Mammary epithelial cell (primary cell): ENCODE measurements at regions of chr5 and their contacts with region 1.

Region 1: DNA sequence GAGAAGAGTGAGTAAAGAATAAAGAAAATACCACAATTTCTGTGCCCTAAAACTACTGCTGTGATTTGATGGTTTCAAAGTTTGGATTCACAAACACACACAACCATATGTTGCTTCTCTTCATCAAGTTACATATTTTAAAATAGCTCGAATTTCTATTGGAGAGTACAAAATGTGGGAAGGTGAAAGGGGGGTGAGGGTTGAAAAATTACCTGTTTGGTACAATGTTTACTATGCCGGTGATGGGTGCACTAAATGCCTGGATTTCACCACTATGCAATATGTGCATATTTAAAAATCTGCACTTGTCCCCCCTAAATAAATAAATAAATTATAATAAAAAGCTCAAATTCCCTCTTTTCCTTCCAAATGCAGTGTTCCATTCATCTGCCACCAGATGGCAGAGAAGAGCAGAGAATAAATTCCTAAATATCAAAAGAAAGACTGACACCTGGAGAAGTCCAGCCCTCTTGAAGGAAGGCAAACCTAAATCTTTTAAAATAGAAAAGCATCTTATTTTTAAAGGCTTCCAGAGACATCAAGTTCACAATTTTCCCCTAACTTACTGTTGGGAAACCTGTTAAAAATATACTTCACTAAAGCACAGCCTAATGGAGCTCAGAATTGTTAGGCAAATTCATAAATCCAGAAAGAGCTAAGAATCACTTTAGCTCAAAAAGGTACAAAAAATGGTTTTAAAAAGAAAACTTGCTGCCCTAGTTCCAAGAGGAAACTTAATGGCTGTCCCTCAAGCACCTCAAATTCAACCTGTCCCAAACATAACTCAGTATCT is 24.8 kb upstream of the HNRNPA0 start:
- DNase-seq: peak; percentile 24
- H3K4me3 ChIP-seq: no peak overlapping the region
- H3K27ac ChIP-seq: no peak overlapping the region
- H3K4me1 ChIP-seq: no peaks in the 10 kb centered on the region
- H3K27me3 ChIP-seq: peaks cover 2% of the 10 kb centered on the region
- CTCF ChIP-seq: peak; percentile 70 to 75

Region 2: GRCh38 chr5:137822158-137822764 is 43.3 kb after region 1 on chr5:
- CTCF ChIA-PET with region 1: no interaction called
- dilution Hi-C with region 1: no loop called
- in situ Hi-C with region 1: loop called in 1 of 2 experiments (anchors 5 kb)
- intact Hi-C with region 1: loop called (anchors 1 kb)
- DNase-seq: peak; percentile 28
- H3K4me3 ChIP-seq: no peak overlapping the region
- H3K27ac ChIP-seq: no peak overlapping the region
- H3K4me1 ChIP-seq: no peaks in the 10 kb centered on the region
- H3K27me3 ChIP-seq: no peaks in the 10 kb centered on the region
- CTCF ChIP-seq: peak; percentile 37 to 68

Region 3: DNA sequence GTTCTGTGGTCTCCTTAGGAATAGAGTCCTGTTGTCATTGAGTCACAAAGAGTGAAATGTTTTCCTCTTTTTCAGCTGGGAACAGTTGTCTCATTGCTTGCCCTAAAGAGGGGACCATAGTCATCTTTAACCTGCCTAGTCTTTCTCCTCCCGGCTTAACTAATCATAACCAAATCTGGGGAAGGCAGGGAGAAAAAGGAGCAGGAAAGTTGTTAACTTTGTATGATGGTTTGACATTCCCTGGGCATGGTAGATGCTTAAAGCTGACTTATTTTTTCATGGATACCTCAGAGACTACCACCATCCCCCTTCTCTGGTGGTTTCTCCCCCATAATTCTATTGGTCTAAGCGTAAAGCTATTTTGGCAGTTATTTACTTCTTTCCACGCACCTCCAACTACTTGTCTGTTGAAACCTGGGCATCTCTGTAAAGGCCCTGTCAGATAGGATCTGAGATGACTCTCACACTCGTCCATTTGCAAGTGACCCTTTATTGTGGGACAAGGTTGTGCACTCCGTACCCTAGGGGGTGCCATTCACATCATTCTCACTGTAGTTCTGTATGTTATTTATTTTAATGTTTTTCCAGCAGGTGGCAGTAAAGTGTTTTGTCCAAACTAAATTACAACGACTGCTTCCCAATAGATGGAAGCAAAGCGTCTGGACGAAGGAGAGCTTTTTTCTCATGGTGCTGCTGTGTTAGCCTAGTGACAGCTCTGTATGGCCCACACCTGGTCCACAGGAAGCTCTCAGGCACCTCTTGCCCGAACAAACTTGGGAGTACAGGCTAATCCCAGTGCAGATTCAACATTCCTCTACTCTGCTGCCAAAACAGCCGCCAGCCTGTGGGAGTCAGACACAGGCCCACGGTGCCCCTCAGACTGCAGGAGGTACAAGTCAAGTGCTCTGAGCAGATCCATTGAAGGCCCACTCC is 256.9 kb after region 1 on chr5:
- CTCF ChIA-PET with region 1: interaction called, 5 read pairs
- dilution Hi-C with region 1: no loop called
- in situ Hi-C with region 1: loop called in 1 of 2 experiments (anchors 25 kb)
- intact Hi-C with region 1: loop called (anchors 1 kb)
- DNase-seq: peak; percentile 77
- H3K4me3 ChIP-seq: no peak overlapping the region
- H3K27ac ChIP-seq: no peak overlapping the region
- H3K4me1 ChIP-seq: peaks cover 10% of the 10 kb centered on the region
- H3K27me3 ChIP-seq: no peaks in the 10 kb centered on the region
- CTCF ChIP-seq: peak; percentile 83 to 88

Region 4: DNA sequence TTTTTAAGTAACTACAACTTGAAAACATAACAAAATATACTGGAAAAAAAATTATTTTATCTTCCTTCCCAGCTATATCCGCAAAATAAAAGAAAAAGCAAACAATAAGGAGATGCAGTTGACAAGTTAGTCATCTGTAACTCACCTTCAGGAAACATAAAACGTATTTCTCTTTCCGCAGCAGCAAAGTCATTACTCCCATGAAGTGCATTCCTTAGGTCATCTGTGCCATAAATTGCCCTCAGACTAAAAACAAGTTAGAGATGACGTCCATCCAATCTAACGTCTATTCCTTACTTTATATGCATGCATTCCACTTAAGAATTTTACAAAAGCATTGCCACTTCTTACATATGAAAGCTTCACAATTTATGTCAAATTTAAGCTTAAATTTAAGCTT is 349.4 kb after region 1 on chr5:
- CTCF ChIA-PET with region 1: no interaction called
- dilution Hi-C with region 1: no loop called
- in situ Hi-C with region 1: no loop called
- intact Hi-C with region 1: loop called (anchors 1 kb)
- DNase-seq: no peak
- H3K4me3 ChIP-seq: no peak overlapping the region
- H3K27ac ChIP-seq: no peak overlapping the region
- H3K4me1 ChIP-seq: no peaks in the 10 kb centered on the region
- H3K27me3 ChIP-seq: no peaks in the 10 kb centered on the region
- CTCF ChIP-seq: no peak